Activated CD4-positive, alpha-beta memory T cell treated with anti-CD3 and anti-CD28 coated beads for 36 hours (primary cell): ENCODE measurements at regions of chr5 and their contacts with region 1.

Region 1: DNA sequence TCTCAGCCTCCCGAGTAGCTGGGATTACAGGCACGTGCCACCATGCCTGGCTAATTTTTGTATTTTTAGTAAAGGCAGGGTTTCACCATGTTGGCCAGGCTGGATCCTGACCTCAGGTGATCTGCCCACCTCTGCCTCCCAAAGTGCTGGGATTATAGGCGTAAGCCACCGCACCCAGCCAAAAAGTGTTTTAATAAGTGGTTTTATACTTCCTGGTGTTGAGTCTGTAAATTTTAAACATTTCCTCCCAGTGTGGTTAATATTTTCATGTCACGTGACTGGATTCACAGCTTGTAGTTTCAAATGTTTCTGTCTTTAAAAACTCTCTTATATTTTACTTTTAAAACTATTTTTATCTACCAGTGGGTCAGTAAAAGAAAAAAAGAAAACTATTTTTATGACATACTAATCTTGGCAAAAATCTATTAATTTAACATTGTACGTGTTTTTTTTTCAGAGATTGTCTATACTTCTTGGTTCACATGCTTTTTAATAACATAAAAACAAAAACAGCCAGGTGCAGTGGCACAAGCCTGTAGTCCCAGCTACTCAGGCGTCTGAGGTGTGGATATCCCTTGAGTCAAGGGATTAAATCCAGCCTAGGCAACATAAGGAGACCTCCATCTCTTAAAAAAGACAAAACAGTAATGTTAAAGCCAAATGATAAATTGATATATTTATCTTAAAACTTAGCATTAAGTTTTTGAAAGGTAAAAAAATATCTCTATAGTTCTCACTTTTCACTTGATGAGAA is 117.1 kb downstream of the DMXL1 start:
- DNase-seq: no peak
- H3K4me3 Mint-ChIP-seq: no peak overlapping the region
- H3K27ac Mint-ChIP-seq: no peak overlapping the region
- H3K4me1 Mint-ChIP-seq: peaks cover 15% of the 10 kb centered on the region
- H3K27me3 Mint-ChIP-seq: no peaks in the 10 kb centered on the region

Region 2: DNA sequence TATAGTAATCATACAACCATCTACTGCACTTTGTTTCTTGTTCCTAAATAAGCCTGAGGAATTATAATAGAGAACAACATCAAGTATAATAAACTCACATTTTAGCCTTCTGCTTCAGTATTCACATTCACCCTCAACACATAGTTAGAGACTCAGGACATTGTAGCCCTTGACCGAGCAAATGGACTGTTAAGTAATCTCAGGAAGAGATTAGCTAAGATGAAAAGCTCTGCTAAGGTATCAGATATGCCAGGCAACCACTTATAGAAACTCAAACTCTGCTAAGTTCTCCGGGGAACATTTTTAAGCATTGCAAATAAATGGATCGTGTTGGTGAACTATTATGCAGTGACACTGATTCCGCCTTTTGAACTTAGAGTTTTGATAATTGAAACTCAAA is 451.6 kb before region 1 on chr5:
- CTCF ChIA-PET with region 1: no interaction called
- POLR2A ChIA-PET with region 1: no interaction called
- intact Hi-C with region 1: no loop called
- DNase-seq: no peak
- H3K4me3 Mint-ChIP-seq: no peak overlapping the region
- H3K27ac Mint-ChIP-seq: no peak overlapping the region
- H3K4me1 Mint-ChIP-seq: no peaks in the 10 kb centered on the region
- H3K27me3 Mint-ChIP-seq: no peaks in the 10 kb centered on the region

Region 3: GRCh38 chr5:119131530-119132313 is 56.2 kb before region 1 on chr5:
- CTCF ChIA-PET with region 1: no interaction called
- POLR2A ChIA-PET with region 1: no interaction called
- intact Hi-C with region 1: no loop called
- DNase-seq: no peak
- H3K4me3 Mint-ChIP-seq: no peak overlapping the region
- H3K27ac Mint-ChIP-seq: no peak overlapping the region
- H3K4me1 Mint-ChIP-seq: no peaks in the 10 kb centered on the region
- H3K27me3 Mint-ChIP-seq: no peaks in the 10 kb centered on the region

Region 4: GRCh38 chr5:119229950-119230349 is 42.0 kb after region 1 on chr5:
- CTCF ChIA-PET with region 1: no interaction called
- POLR2A ChIA-PET with region 1: interaction called, 3 read pairs
- intact Hi-C with region 1: loop called (anchors 5 kb)
- DNase-seq: no peak
- H3K4me3 Mint-ChIP-seq: no peak overlapping the region
- H3K27ac Mint-ChIP-seq: no peak overlapping the region
- H3K4me1 Mint-ChIP-seq: no peaks in the 10 kb centered on the region
- H3K27me3 Mint-ChIP-seq: no peaks in the 10 kb centered on the region

Region 5: DNA sequence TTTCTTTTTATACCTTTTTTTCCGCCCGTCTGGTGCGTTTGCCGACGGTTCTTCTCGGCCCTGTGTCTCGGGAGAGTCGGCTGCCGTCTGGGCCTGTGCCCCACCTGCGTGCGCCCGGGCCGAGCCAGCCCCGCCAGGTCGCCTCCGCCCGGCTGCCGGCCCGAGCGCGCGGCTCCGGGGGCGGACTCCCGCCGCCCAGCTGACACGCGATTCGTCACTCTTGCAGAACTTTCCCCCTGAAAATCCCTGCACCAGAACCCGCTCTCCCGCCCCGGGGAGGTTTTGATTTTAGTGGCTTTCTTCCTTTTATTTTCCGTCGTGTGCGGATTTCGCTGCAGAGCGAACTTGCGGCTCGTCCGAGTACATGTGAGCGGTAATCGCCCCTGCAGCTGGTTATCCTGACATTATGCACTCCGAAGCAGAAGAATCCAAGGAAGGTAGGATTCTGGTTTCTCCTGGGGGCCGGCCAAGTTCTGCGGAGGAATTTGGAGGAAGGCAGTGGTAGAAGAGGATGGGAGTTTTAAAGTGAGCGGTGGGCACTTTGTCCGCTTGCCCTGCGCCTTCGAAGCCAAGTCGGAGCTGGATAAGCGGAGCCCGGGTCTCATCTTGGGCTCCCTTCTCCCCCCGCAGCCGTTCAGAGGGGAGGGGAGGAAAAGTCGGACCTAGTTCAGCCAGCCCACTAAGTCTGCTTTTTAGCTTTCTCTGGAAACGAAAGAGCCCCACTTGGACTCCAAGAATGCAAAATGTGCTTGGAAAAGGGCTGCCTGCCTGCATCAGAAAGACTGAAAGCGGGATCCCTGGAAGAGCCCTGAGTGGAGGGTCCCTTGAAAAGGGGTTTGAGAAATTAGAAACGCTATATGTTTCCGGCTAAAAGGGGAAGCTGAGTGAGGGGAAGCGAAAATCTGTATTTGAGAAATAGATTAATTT is 168.0 kb after region 1 on chr5 and contains the start of gene TNFAIP8:
- CTCF ChIA-PET with region 1: no interaction called
- POLR2A ChIA-PET with region 1: no interaction called
- intact Hi-C with region 1: no loop called
- DNase-seq: peak; percentile 90
- H3K4me3 Mint-ChIP-seq: peak within 1 kb of the TSS; percentile 99
- H3K27ac Mint-ChIP-seq: peak within 1 kb of the TSS; percentile 90
- H3K4me1 Mint-ChIP-seq: peaks cover 71% of the 10 kb centered on the region
- H3K27me3 Mint-ChIP-seq: no peaks in the 10 kb centered on the region
- total RNA-seq, gene TNFAIP8: 153 to 159 TPM